H1 (cell line): ENCODE measurements at regions of chr1 and their contacts with region 1.

Region 1: GRCh38 chr1:156500797-156501499 is 373 bp upstream of the MEF2D start:
- DNase-seq: peak; percentile 75 to 96
- H3K4me3 ChIP-seq: peak overlapping the region; percentile 74 to 96 (median 83)
- H3K27ac ChIP-seq: peak overlapping the region; percentile 88
- H3K4me1 ChIP-seq: peaks cover 37 to 54% (median 43%) of the 10 kb centered on the region in 4 experiments
- H3K27me3 ChIP-seq: no peaks in the 10 kb centered on the region; a peak in 1 of 7 replicates
- CTCF ChIP-seq: peak; percentile 23 to 46 (median 39)
- EP300 ChIP-seq: no peak
- POLR2A ChIP-seq: peak in 1 of 2 experiments; percentile 64; a peak in 1 of 3 replicates
- RAD21 ChIP-seq: peak in 1 of 2 experiments; percentile 25; a peak in 1 of 4 replicates

Region 2: DNA sequence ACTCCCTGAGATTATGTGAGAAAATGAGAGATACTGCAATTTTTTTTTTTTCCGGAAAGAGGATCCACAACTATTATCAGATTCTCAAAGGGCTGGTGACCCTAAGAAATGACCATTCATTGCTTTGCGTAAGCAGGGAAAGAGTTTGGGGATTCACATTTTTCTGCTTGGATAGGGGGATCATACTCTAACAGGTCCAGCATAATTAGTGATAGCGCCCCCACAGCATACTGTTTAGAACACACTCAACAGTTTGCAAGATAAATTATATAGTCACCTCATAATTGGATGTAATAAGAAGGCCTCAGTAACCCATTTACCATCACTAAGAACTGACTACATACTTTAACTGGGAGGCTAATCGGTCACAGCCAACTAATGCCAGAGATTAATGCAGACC is 164.7 kb before region 1 on chr1:
- CTCF ChIA-PET with region 1: no interaction called
- POLR2A ChIA-PET with region 1: no interaction called
- DNase-seq: no peak
- H3K4me3 ChIP-seq: peak overlapping the region; percentile 83 to 100 (median 94); a peak in 5 of 8 replicates
- H3K27ac ChIP-seq: no peak overlapping the region
- H3K4me1 ChIP-seq: 0 out of 7 replicates have a peak, but pooled peaks cover 0 to 2% (median 0%) of the 10 kb centered on the region in 4 experiments
- H3K27me3 ChIP-seq: no peaks in the 10 kb centered on the region
- CTCF ChIP-seq: peak in 2 of 3 experiments; percentile 1 to 49; a peak in 1 of 4 replicates
- EP300 ChIP-seq: no peak
- POLR2A ChIP-seq: no peak
- RAD21 ChIP-seq: no peak

Region 3: DNA sequence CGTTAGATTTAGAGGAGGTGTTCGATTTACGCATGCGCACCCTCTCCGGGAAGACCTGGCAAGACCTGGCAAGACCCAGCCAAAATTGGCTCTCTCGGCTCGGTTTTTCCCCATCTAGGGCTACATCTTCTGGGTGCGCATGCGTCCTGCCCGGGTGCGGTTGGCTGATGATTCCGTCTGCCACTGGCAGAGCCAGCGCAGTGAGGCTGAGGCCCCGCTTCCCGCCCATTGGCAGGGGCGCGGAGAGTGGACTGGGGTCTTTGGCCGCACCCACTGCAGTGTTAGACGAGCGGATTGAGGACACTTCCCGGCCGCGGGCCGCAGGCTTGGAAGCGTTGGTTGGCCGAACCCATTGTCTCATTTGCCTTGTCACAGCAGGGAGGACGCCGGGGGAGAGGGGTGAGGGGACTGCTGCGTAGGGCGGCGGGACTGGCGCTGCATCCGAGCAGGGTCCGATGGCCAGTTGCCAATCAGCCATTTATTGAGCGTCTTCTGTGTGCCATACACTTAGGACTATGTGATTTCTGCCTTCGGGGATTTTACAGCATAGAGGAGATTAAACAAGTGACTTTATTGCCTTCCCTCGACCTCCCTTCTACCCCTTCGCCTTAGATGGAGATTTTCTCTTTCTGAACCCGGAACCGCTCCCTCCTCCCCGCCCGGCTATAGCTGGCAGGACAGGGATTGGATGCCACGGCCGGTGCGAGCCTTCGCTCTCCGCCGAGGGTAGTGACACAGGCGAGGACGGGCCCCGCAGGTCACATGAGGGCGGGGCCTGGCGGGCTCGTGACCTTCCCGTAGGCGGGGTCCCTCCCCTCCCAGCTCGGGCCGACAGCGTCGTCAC is 44.1 kb before region 1 on chr1:
- CTCF ChIA-PET with region 1: interaction called, 6 read pairs
- POLR2A ChIA-PET with region 1: interaction called, 17 read pairs
- DNase-seq: peak; percentile 95 to 98
- H3K4me3 ChIP-seq: peak overlapping the region; percentile 57 to 83 (median 69)
- H3K27ac ChIP-seq: peak overlapping the region; percentile 77
- H3K4me1 ChIP-seq: peaks cover 0 to 5% (median under 1%) of the 10 kb centered on the region in 4 experiments; a peak in 2 of 7 replicates
- H3K27me3 ChIP-seq: no peaks in the 10 kb centered on the region
- CTCF ChIP-seq: no peak
- EP300 ChIP-seq: no peak
- POLR2A ChIP-seq: peak; percentile 47 to 87
- RAD21 ChIP-seq: no peak

Region 4: GRCh38 chr1:156465747-156466365 is 35.1 kb before region 1 on chr1:
- CTCF ChIA-PET with region 1: interaction called, 19 read pairs
- POLR2A ChIA-PET with region 1: interaction called, 6 read pairs
- DNase-seq: peak in 1 of 2 experiments; percentile 73
- H3K4me3 ChIP-seq: no peak overlapping the region
- H3K27ac ChIP-seq: no peak overlapping the region
- H3K4me1 ChIP-seq: peaks cover 0 to 18% (median 8%) of the 10 kb centered on the region in 4 experiments; a peak in 5 of 7 replicates
- H3K27me3 ChIP-seq: no peaks in the 10 kb centered on the region; a peak in 1 of 7 replicates
- CTCF ChIP-seq: peak; percentile 66 to 68 (median 68)
- EP300 ChIP-seq: no peak
- POLR2A ChIP-seq: no peak
- RAD21 ChIP-seq: peak; percentile 66 to 78

Region 5: GRCh38 chr1:156489166-156489934 is 11.6 kb before region 1 on chr1:
- CTCF ChIA-PET with region 1: interaction called, 236 read pairs
- POLR2A ChIA-PET with region 1: interaction called, 166 read pairs
- DNase-seq: no peak
- H3K4me3 ChIP-seq: peak overlapping the region in 1 of 4 experiments; percentile 51; a peak in 2 of 8 replicates
- H3K27ac ChIP-seq: no peak overlapping the region
- H3K4me1 ChIP-seq: peaks cover 9 to 44% (median 28%) of the 10 kb centered on the region in 4 experiments
- H3K27me3 ChIP-seq: no peaks in the 10 kb centered on the region
- CTCF ChIP-seq: peak in 2 of 3 experiments; percentile 26 to 32; a peak in 2 of 4 replicates
- EP300 ChIP-seq: no peak
- POLR2A ChIP-seq: no peak
- RAD21 ChIP-seq: peak; percentile 18 to 31; a peak in 1 of 4 replicates

Region 6: DNA sequence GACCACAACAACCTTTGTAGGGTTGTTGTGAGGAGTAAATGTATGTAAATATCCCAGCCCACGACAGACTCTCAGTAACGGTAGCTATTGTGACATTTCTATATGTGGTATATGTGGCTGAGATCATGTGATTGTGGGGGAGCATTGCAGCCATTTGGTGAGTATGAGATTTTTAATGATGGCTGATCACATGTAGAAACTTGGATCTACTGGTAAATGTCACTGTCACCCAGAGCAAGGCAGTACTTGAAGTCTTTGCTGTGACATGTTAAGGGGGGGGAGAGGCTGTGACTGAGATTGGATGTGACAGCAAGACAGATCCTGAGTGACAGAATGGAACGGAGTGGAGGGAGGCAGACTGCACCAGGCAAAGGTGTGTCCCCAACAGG is 23.5 kb after region 1 on chr1:
- CTCF ChIA-PET with region 1: interaction called, 25 read pairs
- POLR2A ChIA-PET with region 1: interaction called, 20 read pairs
- DNase-seq: no peak
- H3K4me3 ChIP-seq: no peak overlapping the region
- H3K27ac ChIP-seq: no peak overlapping the region
- H3K4me1 ChIP-seq: peaks cover 3 to 15% (median 11%) of the 10 kb centered on the region in 4 experiments
- H3K27me3 ChIP-seq: no peaks in the 10 kb centered on the region
- CTCF ChIP-seq: no peak
- EP300 ChIP-seq: no peak
- POLR2A ChIP-seq: no peak
- RAD21 ChIP-seq: no peak

Region 7: DNA sequence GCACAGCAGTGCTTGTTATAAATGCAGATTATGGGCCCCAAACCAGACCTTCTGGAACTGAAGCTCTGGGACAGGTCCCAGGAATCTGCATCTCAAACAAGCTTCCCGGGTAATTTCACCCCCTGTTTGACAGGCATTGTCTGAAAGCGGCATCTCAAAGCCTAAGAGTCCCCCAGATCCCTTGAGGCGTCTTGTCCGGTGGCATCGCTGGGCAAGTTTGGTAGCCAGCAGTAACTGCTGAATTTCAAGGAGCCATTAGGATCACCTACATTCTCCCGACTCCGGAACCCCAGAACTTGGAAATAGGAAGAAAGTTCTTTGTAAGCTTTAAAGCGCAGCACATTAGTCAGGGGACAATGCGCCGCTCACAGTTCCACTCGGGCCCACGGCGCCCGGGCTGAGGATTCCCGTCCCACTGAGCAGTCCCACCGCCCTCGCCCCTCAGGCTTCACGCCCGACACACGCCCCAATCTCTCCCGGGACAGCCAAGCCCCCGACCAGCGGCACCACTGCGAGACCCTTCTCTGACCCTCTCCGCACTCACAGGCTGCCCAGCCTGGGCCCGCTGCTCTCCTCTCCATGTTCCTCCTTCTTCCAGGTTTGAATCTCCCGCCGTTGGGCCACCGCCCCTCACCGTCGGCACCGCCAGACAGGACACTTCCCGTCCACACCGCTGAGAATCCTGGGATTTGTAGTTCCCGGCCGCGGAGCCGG is 71.2 kb after region 1 on chr1 and contains the start of gene IQGAP3:
- CTCF ChIA-PET with region 1: no interaction called
- POLR2A ChIA-PET with region 1: no interaction called
- DNase-seq: peak in 1 of 2 experiments; percentile 95
- H3K4me3 ChIP-seq: peak within 1 kb of the TSS; percentile 86 to 92 (median 89)
- H3K27ac ChIP-seq: no peak within 1 kb of the TSS
- H3K4me1 ChIP-seq: no peaks in the 10 kb centered on the region; a peak in 1 of 7 replicates
- H3K27me3 ChIP-seq: no peaks in the 10 kb centered on the region
- CTCF ChIP-seq: no peak
- EP300 ChIP-seq: no peak
- POLR2A ChIP-seq: no peak; a peak in 1 of 3 replicates
- RAD21 ChIP-seq: no peak
- total RNA-seq, gene IQGAP3: 20.9 and 22.3 TPM in 2 replicates

Region 8: DNA sequence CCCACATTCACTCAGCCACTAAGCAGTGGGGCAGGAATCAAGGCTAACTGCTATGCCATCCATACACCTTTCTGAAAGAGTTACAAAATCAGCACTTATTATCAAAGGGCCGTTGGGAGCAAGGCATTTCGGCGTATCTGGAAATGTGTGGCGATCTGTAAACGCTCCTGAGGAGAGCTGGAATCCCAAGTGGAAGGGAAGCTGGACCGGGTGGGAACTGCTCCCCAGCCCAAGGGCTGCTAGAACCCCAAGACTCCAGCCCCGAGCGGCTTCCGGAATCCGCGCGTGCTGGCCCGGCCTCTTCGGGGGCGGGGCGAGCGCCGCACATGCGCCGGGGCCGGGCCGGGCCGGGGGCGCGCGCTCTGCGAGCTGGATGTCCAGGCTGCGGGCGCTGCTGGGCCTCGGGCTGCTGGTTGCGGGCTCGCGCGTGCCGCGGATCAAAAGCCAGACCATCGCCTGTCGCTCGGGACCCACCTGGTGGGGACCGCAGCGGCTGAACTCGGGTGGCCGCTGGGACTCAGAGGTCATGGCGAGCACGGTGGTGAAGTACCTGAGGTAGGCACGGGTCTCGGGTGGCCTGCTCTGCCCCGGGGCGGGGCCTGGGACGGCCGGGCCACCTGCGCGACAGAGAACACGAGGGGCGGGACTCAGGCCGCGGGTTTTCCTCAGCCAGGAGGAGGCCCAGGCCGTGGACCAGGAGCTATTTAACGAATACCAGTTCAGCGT is 90.6 kb after region 1 on chr1 and contains the start of gene NAXE:
- CTCF ChIA-PET with region 1: interaction called, 3 read pairs
- POLR2A ChIA-PET with region 1: interaction called, 14 read pairs
- DNase-seq: peak in 1 of 2 experiments; percentile 80
- H3K4me3 ChIP-seq: peak within 1 kb of the TSS; percentile 62 to 87 (median 81)
- H3K27ac ChIP-seq: peak within 1 kb of the TSS; percentile 26; the same call in 1 of the 2 replicates
- H3K4me1 ChIP-seq: peaks cover 0 to 10% (median 2%) of the 10 kb centered on the region in 4 experiments; a peak in 4 of 7 replicates
- H3K27me3 ChIP-seq: no peaks in the 10 kb centered on the region
- CTCF ChIP-seq: no peak
- EP300 ChIP-seq: no peak
- POLR2A ChIP-seq: peak; percentile 64; a peak in 2 of 3 replicates
- RAD21 ChIP-seq: no peak
- total RNA-seq, gene NAXE: 73.1 and 75.4 TPM in 2 replicates